Activated naive CD4-positive, alpha-beta T cell treated with anti-CD3 and anti-CD28 coated beads for 36 hours (primary cell): ENCODE measurements at regions of chr2 and their contacts with region 1.

Region 1: GRCh38 chr2:111120253-111121027 is at the start of gene BCL2L11:
- DNase-seq: peak; percentile 88
- H3K4me3 Mint-ChIP-seq: peak within 1 kb of the TSS; percentile 83
- H3K27ac Mint-ChIP-seq: peak within 1 kb of the TSS; percentile 44
- H3K4me1 Mint-ChIP-seq: peaks cover 52% of the 10 kb centered on the region
- H3K27me3 Mint-ChIP-seq: peaks cover 22% of the 10 kb centered on the region
- total RNA-seq, gene BCL2L11: 11.5 to 12.8 TPM

Region 2: DNA sequence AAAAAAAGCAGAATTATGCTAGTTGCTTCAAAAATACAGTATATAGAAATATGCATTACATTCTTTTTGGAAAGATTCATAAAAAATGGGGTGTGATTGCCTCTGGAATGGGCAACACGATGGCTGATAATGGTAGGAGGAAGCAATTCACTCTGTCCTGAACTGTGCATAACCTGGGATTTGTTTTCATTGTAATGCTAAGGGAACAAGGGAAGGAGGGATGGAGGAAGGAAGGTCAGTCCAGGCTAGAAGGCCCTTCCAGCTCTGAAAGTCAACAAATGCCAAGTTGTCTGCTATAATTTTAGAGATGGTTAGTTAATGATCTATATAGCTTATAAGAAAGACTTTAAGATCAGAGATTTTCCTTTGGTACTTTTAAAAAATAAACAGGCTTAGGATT is 483.3 kb before region 1 on chr2:
- CTCF ChIA-PET with region 1: no interaction called
- intact Hi-C with region 1: no loop called
- DNase-seq: no peak
- H3K4me3 Mint-ChIP-seq: no peak overlapping the region
- H3K27ac Mint-ChIP-seq: no peak overlapping the region
- H3K4me1 Mint-ChIP-seq: no peaks in the 10 kb centered on the region
- H3K27me3 Mint-ChIP-seq: no peaks in the 10 kb centered on the region

Region 3: GRCh38 chr2:110748489-110748867 is 372.0 kb before region 1 on chr2:
- CTCF ChIA-PET with region 1: no interaction called
- intact Hi-C with region 1: loop called (anchors 1 kb)
- DNase-seq: peak; percentile 83
- H3K4me3 Mint-ChIP-seq: no peak overlapping the region
- H3K27ac Mint-ChIP-seq: no peak overlapping the region
- H3K4me1 Mint-ChIP-seq: peaks cover 17% of the 10 kb centered on the region
- H3K27me3 Mint-ChIP-seq: peaks cover 70% of the 10 kb centered on the region

Region 4: GRCh38 chr2:110812726-110813645 is 307.5 kb before region 1 on chr2:
- CTCF ChIA-PET with region 1: interaction called, 11 read pairs
- intact Hi-C with region 1: no loop called
- DNase-seq: no peak
- H3K4me3 Mint-ChIP-seq: no peak overlapping the region
- H3K27ac Mint-ChIP-seq: no peak overlapping the region
- H3K4me1 Mint-ChIP-seq: peaks cover 4% of the 10 kb centered on the region
- H3K27me3 Mint-ChIP-seq: peaks cover 22% of the 10 kb centered on the region

Region 5: GRCh38 chr2:111054791-111055691 is 65.4 kb before region 1 on chr2:
- CTCF ChIA-PET with region 1: no interaction called
- intact Hi-C with region 1: loop called (anchors 2 kb)
- DNase-seq: peak; percentile 80
- H3K4me3 Mint-ChIP-seq: no peak overlapping the region
- H3K27ac Mint-ChIP-seq: no peak overlapping the region
- H3K4me1 Mint-ChIP-seq: peaks cover 30% of the 10 kb centered on the region
- H3K27me3 Mint-ChIP-seq: peaks cover 30% of the 10 kb centered on the region

Region 6: DNA sequence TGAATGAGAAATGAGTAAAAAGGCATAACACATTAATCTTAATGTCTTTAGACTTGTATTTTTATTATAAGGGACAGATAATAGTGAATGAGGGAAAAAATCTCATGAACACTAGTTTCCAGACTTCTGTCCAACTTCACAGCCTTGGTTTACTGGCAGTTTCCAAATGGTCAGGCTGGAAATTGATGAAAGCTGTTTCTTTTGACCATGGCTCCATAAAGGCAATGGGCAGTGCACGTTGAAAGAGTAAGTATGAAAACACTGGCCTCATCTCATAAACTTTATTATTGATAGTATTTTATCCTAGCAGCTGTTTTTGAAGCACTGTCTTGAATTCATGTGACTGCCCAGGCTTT is 23.4 kb after region 1 on chr2:
- CTCF ChIA-PET with region 1: no interaction called
- intact Hi-C with region 1: no loop called
- DNase-seq: no peak
- H3K4me3 Mint-ChIP-seq: no peak overlapping the region
- H3K27ac Mint-ChIP-seq: no peak overlapping the region
- H3K4me1 Mint-ChIP-seq: peaks cover 23% of the 10 kb centered on the region
- H3K27me3 Mint-ChIP-seq: no peaks in the 10 kb centered on the region

Region 7: GRCh38 chr2:111209045-111209514 is 88.6 kb after region 1 on chr2:
- CTCF ChIA-PET with region 1: interaction called, 4 read pairs
- intact Hi-C with region 1: loop called (anchors 2 kb)
- DNase-seq: peak; percentile 71
- H3K4me3 Mint-ChIP-seq: no peak overlapping the region
- H3K27ac Mint-ChIP-seq: no peak overlapping the region
- H3K4me1 Mint-ChIP-seq: peaks cover 10% of the 10 kb centered on the region
- H3K27me3 Mint-ChIP-seq: peaks cover 14% of the 10 kb centered on the region

Region 8: GRCh38 chr2:112054847-112055729 is 934.6 kb after region 1 on chr2 and contains the start of gene TMEM87B:
- CTCF ChIA-PET with region 1: no interaction called
- intact Hi-C with region 1: loop called (anchors 2 kb)
- DNase-seq: peak; percentile 99
- H3K4me3 Mint-ChIP-seq: peak within 1 kb of the TSS; percentile 97
- H3K27ac Mint-ChIP-seq: peak within 1 kb of the TSS; percentile 99
- H3K4me1 Mint-ChIP-seq: peaks cover 42% of the 10 kb centered on the region
- H3K27me3 Mint-ChIP-seq: no peaks in the 10 kb centered on the region
- total RNA-seq, gene TMEM87B: 10.5 to 12.0 TPM